Activated T-helper 1 cell treated with anti-CD3 and anti-CD28 coated beads, Interleukin-12 subunit alpha, Interleukin-12 subunit beta, Interleukin-2, Interleukin-4 antibody, amounts not matched to agents 30 ng/mL and 10 ng/mL and 1 ng/mL, durations not matched to agents 14 hours and 24 hours and 36 hours (primary cell): ENCODE measurements at regions of chr5 and their contacts with region 1.

Region 1: DNA sequence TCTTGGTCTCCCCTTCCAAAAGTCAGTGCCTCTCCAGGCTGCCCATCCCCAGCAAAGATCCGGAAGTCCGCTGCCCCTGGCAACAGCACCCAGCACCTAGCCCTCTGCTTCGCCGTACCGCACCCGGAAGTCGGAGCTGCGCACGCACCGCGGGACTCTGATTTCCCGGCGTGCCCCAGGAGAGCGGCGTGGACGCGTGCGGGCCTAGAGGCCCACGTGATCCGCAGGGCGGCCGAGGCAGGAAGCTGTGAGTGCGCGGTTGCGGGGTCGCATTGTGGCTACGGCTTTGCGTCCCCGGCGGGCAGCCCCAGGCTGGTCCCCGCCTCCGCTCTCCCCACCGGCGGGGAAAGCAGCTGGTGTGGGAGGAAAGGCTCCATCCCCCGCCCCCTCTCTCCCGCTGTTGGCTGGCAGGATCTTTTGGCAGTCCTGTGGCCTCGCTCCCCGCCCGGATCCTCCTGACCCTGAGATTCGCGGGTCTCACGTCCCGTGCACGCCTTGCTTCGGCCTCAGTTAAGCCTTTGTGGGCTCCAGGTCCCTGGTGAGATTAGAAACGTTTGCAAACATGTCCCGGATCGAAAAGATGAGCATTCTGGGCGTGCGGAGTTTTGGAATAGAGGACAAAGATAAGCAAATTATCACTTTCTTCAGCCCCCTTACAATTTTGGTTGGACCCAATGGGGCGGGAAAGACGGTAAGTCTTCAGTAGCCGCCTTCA is at the start of gene RAD50:
- DNase-seq: peak; percentile 92
- H3K4me3 Mint-ChIP-seq: peak within 1 kb of the TSS; percentile 98
- H3K27ac Mint-ChIP-seq: peak within 1 kb of the TSS; percentile 91
- H3K4me1 Mint-ChIP-seq: peaks cover 32% of the 10 kb centered on the region
- H3K27me3 Mint-ChIP-seq: peaks cover 4% of the 10 kb centered on the region
- total RNA-seq, gene RAD50: 30.9 and 33.0 TPM in 2 replicates

Region 2: GRCh38 chr5:132546108-132546507 is 10.8 kb before region 1 on chr5:
- intact Hi-C with region 1: loop called (anchors 1 kb)
- DNase-seq: no peak
- H3K4me3 Mint-ChIP-seq: no peak overlapping the region
- H3K27ac Mint-ChIP-seq: peak overlapping the region; percentile 15
- H3K4me1 Mint-ChIP-seq: peaks cover 38% of the 10 kb centered on the region
- H3K27me3 Mint-ChIP-seq: no peaks in the 10 kb centered on the region

Region 3: GRCh38 chr5:132622608-132623007 is 65.7 kb after region 1 on chr5:
- intact Hi-C with region 1: no loop called
- DNase-seq: no peak
- H3K4me3 Mint-ChIP-seq: no peak overlapping the region
- H3K27ac Mint-ChIP-seq: peak overlapping the region; percentile 16
- H3K4me1 Mint-ChIP-seq: peaks cover 24% of the 10 kb centered on the region
- H3K27me3 Mint-ChIP-seq: no peaks in the 10 kb centered on the region

Region 4: DNA sequence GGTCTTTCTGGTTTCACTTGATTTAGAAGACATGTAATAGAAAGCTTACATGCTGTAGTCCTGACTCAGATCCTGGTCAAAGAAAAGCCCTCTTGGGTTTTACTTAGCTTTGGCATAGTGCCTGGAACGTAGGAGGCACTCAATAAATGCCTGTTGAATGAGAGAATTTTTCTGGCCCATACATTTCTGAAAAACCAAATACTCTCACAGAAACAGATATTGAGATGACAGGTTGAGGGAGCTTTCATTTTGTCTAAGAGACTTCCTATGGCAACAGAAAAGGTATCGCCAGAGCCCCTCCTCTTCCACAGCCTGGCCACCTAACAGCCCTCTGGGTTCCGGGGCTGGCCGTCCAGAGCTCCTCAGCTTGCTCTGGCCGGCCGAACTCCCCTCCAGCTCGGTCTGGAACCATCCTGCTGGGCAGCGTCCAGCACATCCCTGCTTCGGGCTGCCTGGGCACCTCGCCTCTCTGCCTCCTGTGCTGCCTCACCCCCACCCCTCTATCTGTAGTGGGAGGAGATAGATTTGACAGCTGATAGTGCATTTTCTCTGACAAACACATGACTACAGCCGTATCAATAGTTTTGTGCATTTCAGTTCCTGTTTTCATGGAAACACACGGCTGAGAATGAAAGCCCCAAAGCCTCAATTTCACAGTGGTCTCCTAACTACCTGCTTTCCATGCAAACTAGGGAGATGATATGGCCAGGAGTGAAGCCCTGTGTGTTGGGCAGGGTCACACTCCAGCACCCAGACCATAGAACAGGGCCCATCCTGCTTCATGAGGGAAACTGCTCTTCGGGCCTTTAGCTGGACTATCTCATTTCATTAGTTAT is 118.0 kb after region 1 on chr5:
- intact Hi-C with region 1: no loop called
- DNase-seq: no peak
- H3K4me3 Mint-ChIP-seq: peak overlapping the region; percentile 63
- H3K27ac Mint-ChIP-seq: peak overlapping the region; percentile 88
- H3K4me1 Mint-ChIP-seq: peaks cover 41% of the 10 kb centered on the region
- H3K27me3 Mint-ChIP-seq: no peaks in the 10 kb centered on the region